Pancreas (tissue), 10 donors: ENCODE measurements at regions of chr6 and their contacts with region 1.

Region 1: DNA sequence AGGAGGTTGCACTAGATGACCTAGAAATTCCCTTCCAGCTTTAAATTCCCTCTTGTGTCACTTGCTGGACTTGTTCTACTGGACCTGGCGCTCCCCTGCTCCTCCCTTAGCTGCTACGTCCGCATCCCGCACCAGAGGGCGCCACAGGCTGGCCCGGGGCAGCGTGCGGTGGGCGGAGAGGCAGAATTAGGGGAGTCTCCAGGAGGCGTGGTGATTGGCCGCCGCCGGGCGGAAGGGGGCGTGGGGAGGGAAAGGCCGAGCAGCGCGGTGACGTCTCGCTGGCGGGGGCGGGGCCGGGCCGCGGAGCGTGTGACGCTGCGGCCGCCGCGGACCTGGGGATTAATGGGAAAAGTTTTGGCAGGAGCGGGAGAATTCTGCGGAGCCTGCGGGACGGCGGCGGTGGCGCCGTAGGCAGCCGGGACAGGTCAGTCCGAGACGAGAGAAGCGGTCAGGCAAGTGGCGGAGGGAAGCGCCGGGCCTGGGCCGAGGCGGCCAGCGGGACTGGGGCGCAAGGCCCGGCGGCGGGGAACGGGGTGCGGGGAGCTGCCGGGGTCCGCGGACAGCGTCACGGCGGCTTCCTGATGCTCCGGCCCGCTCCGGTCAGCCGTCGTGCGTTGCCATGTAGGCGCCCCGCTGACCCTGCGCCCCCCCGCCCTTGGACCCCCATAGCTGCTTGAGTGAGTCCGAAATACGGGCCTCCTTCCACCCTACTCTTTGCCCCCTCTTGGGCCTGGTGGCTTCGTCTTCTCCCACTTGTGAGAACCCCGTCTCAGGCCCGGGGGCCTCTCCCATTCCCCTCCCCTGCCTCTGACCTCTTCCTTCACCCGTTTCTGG is at the start of gene PPARD:
- DNase-seq: peak; percentile 98 to 100 (median 99)
- ATAC-seq: peak; percentile 99 to 100 (median 100)
- H3K4me3 ChIP-seq: peak within 1 kb of the TSS; percentile 64 to 95 (median 80)
- H3K27ac ChIP-seq: peak within 1 kb of the TSS; percentile 50 to 86 (median 72)
- H3K4me1 ChIP-seq: peaks cover 0 to 13% (median 8%) of the 10 kb centered on the region in 3 donors
- H3K27me3 ChIP-seq: no peaks in the 10 kb centered on the region
- CTCF ChIP-seq: peak; percentile 87 to 97 (median 94)
- total RNA-seq, gene PPARD: 4.4 to 12.3 (median 6.0) TPM

Region 2: GRCh38 chr6:35415065-35415991 is 72.9 kb after region 1 on chr6:
- intact Hi-C with region 1: loop called in 1 of 3 experiments (anchors 10 kb)
- DNase-seq: peak; percentile 75 to 87 (median 80)
- ATAC-seq: peak; percentile 96 to 99 (median 97)
- H3K4me3 ChIP-seq: no peak overlapping the region
- H3K27ac ChIP-seq: no peak overlapping the region
- H3K4me1 ChIP-seq: peaks cover 0 to 3% (median 0%) of the 10 kb centered on the region in 3 donors
- H3K27me3 ChIP-seq: no peaks in the 10 kb centered on the region
- CTCF ChIP-seq: peak in 3 of 4 donors; percentile 34 to 53 (median 41)

Region 3: GRCh38 chr6:35449287-35449881 is 106.9 kb after region 1 on chr6:
- intact Hi-C with region 1: loop called in 2 of 3 experiments (anchors 5 kb)
- DNase-seq: peak in 2 of 6 donors; percentile 20 to 28
- ATAC-seq: peak; percentile 45 to 78 (median 66)
- H3K4me3 ChIP-seq: no peak overlapping the region
- H3K27ac ChIP-seq: no peak overlapping the region
- H3K4me1 ChIP-seq: peaks cover 0 to 11% (median 0%) of the 10 kb centered on the region in 3 donors
- H3K27me3 ChIP-seq: no peaks in the 10 kb centered on the region
- CTCF ChIP-seq: peak; percentile 32 to 67 (median 47)